ENCODE measurements at regions of chr9 and their contacts with region 1.

Region 1: DNA sequence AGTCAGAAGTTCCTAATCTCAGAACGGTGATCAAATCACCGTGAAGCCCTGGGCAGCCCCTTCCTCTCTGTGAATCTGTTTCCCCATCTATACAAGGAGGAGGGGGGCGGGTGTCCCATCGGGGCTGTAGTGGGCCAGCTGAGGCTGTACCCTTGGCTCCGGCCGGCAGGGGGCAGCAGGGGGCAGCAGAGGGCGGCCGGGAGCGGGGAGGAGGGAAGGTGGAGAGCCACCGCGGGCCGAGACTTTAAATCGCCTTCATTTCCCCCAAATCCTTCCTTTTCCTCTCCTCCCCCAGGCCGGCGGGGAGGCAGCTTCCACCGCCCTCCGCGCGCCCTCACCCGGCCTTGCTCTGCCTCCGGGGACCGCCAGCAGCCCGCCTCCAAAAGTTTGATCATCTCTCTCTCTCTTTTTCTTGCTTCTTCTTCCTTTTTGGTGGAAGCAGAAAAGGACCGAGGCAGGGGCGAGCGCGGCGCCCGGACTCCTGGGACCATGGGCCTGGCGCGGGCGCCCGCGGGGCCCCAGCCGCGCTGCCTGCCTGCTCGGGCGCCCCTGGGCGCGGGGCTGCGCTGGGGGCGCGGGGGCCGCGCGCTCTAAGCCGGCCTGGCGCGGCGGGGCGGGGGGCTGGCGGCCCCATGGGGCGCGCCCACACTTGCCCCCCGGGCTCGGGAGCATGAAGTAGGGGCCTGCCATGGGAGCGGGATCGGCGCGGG is at the start of gene COL27A1:
- DNase-seq: no peak
- H3K4me3 ChIP-seq: peak within 1 kb of the TSS; percentile 76
- H3K27ac ChIP-seq: peak within 1 kb of the TSS; percentile 47
- H3K27me3 ChIP-seq: peaks cover 11% of the 10 kb centered on the region
- CTCF ChIP-seq: peak; percentile 88
- polyA plus RNA-seq, gene COL27A1: 8.5 and 10.0 TPM in 2 replicates

Region 2: GRCh38 chr9:113998525-113999255 is 156.7 kb before region 1 on chr9:
- CTCF ChIA-PET with region 1: no interaction called
- POLR2A ChIA-PET with region 1: no interaction called
- DNase-seq: no peak
- H3K4me3 ChIP-seq: no peak overlapping the region
- H3K27ac ChIP-seq: no peak overlapping the region
- H3K27me3 ChIP-seq: no peaks in the 10 kb centered on the region
- CTCF ChIP-seq: peak; percentile 53

Region 3: GRCh38 chr9:114141553-114142402 is 13.6 kb before region 1 on chr9:
- CTCF ChIA-PET with region 1: interaction called, 46 read pairs
- POLR2A ChIA-PET with region 1: no interaction called
- DNase-seq: no peak
- H3K4me3 ChIP-seq: no peak overlapping the region
- H3K27ac ChIP-seq: peak overlapping the region; percentile 11
- H3K27me3 ChIP-seq: peaks cover 73% of the 10 kb centered on the region
- CTCF ChIP-seq: no peak

Region 4: GRCh38 chr9:114174876-114175771 is 19.7 kb after region 1 on chr9:
- CTCF ChIA-PET with region 1: interaction called, 11 read pairs
- POLR2A ChIA-PET with region 1: interaction called, 7 read pairs
- DNase-seq: no peak
- H3K4me3 ChIP-seq: no peak overlapping the region
- H3K27ac ChIP-seq: peak overlapping the region; percentile 94
- H3K27me3 ChIP-seq: no peaks in the 10 kb centered on the region
- CTCF ChIP-seq: no peak

Region 5: DNA sequence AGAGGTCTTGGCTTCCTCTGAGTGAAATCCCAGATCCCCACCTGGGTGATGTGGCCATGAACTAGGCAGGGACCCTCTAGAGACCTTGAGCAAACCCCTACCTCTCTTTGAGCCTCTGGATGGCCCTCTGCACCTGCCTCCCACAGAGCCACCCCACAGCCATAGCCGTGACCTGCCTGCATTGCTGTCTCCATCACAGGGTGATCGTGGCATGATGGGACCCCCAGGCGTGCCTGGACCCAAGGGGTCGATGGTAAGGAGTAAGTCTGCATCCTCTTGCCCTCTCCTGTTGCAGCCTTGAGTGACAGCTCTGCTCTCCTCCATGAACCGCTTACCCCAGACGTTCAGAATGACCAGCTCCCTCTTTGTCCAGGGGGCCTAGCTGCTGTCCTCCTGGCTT is 97.0 kb after region 1 on chr9:
- CTCF ChIA-PET with region 1: interaction called, 10 read pairs
- POLR2A ChIA-PET with region 1: no interaction called
- DNase-seq: no peak
- H3K4me3 ChIP-seq: no peak overlapping the region
- H3K27ac ChIP-seq: no peak overlapping the region
- H3K27me3 ChIP-seq: no peaks in the 10 kb centered on the region
- CTCF ChIP-seq: no peak

Region 6: DNA sequence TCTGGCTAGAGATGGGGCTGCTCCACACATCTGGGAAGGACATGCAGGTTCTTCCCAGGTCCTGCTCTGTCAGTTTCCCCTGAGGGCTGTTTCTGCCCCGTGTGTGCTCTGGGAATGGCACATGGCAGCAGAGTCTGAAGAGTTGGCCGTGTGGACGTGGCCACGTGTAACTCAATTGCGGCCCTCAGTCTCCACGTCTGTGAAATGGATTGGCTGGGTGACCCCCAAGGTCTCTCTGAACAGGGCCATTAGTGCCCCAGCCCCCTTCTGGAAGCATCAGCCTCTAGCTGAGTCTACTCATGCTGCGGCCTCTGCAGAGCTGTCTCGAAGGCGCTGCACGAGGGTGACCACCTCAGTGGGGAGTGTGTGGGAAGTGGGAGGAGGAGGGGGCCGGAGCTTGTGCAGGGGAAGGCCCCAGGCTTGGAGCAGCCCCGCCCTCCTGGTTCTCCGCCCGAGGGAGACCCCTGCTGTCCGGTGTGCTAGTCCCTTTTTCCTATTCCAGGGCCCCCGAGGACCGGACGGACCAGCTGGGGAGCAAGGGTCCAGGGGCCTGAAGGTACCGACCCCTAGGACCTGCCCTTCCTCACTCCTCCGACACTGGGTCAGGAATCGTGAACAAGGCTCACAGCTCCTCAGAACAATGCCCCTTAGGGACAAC is 108.6 kb after region 1 on chr9:
- CTCF ChIA-PET with region 1: interaction called, 18 read pairs
- POLR2A ChIA-PET with region 1: no interaction called
- DNase-seq: no peak
- H3K4me3 ChIP-seq: no peak overlapping the region
- H3K27ac ChIP-seq: no peak overlapping the region
- H3K27me3 ChIP-seq: no peaks in the 10 kb centered on the region
- CTCF ChIP-seq: peak; percentile 51

Region 7: GRCh38 chr9:114271641-114272081 is 116.2 kb after region 1 on chr9:
- CTCF ChIA-PET with region 1: interaction called, 10 read pairs
- POLR2A ChIA-PET with region 1: no interaction called
- DNase-seq: no peak
- H3K4me3 ChIP-seq: no peak overlapping the region
- H3K27ac ChIP-seq: no peak overlapping the region
- H3K27me3 ChIP-seq: no peaks in the 10 kb centered on the region
- CTCF ChIP-seq: peak; percentile 54